ENCODE measurements at regions of chr10 and their contacts with region 1.

Region 1: GRCh38 chr10:17430647-17431355 is 23.6 kb downstream of the ST8SIA6 start:
- DNase-seq: peak; percentile 79
- H3K4me3 Mint-ChIP-seq: no peak overlapping the region
- H3K27ac Mint-ChIP-seq: no peak overlapping the region
- H3K4me1 Mint-ChIP-seq: peaks cover 55% of the 10 kb centered on the region
- H3K27me3 Mint-ChIP-seq: no peaks in the 10 kb centered on the region

Region 2: GRCh38 chr10:16817125-16818019 is 613.4 kb before region 1 on chr10 and contains the start of gene RSU1:
- CTCF ChIA-PET with region 1: no interaction called
- intact Hi-C with region 1: loop called (anchors 1 kb)
- DNase-seq: peak; percentile 100
- H3K4me3 Mint-ChIP-seq: peak within 1 kb of the TSS; percentile 89
- H3K27ac Mint-ChIP-seq: peak within 1 kb of the TSS; percentile 90
- H3K4me1 Mint-ChIP-seq: peaks cover 23% of the 10 kb centered on the region
- H3K27me3 Mint-ChIP-seq: no peaks in the 10 kb centered on the region
- total RNA-seq, gene RSU1: 43.4 to 45.1 TPM

Region 3: GRCh38 chr10:16843252-16843870 is 587.4 kb before region 1 on chr10:
- CTCF ChIA-PET with region 1: no interaction called
- intact Hi-C with region 1: loop called (anchors 1 kb)
- DNase-seq: no peak
- H3K4me3 Mint-ChIP-seq: no peak overlapping the region
- H3K27ac Mint-ChIP-seq: no peak overlapping the region
- H3K4me1 Mint-ChIP-seq: no peaks in the 10 kb centered on the region
- H3K27me3 Mint-ChIP-seq: no peaks in the 10 kb centered on the region

Region 4: GRCh38 chr10:17029581-17030271 is 401.1 kb before region 1 on chr10:
- CTCF ChIA-PET with region 1: no interaction called
- intact Hi-C with region 1: loop called (anchors 5 kb)
- DNase-seq: peak; percentile 94
- H3K4me3 Mint-ChIP-seq: peak overlapping the region; percentile 61
- H3K27ac Mint-ChIP-seq: peak overlapping the region; percentile 83
- H3K4me1 Mint-ChIP-seq: peaks cover 69% of the 10 kb centered on the region
- H3K27me3 Mint-ChIP-seq: no peaks in the 10 kb centered on the region

Region 5: DNA sequence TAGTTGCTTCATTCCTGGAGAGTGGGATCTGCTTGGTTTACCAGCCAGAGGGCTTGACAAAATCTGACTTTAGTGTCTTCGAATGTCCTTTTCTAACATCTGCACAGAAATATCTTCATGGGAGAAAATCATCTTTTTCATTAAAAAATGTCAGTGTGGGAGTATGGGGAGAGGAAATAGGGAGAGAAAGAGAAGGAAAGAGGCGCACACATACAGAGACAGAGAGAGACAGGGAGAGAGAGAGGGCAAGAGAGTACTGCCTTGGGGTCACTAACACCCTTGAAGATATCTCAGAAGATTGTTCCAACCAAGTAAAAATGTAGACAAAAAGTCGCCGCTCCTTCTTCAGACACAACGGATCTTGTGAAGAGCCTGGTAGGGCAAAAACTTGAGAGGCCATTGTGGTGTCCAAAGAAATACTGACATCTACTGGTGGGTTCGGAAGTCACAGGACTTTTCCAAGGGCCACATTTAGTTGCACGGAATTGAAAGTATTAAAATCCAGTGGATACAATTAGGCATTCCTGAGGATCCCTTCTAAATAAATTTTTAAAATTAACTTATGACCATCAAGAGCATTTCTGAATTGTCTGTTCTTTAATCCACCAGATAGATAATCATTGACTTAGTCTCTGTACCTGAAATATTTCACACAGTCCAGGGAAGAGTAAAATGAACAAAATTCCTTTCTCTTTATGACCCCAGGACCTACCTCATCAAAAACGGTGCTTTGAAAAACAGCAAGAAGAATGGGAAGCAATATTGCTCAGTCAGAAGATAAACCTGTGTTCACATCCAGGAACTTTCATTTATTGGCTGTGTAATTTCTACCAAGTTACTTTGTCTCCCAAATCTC is 173.1 kb before region 1 on chr10:
- CTCF ChIA-PET with region 1: interaction called, 5 read pairs
- intact Hi-C with region 1: loop called (anchors 1 kb)
- DNase-seq: peak; percentile 67
- H3K4me3 Mint-ChIP-seq: peak overlapping the region; percentile 3
- H3K27ac Mint-ChIP-seq: no peak overlapping the region
- H3K4me1 Mint-ChIP-seq: peaks cover 4% of the 10 kb centered on the region
- H3K27me3 Mint-ChIP-seq: no peaks in the 10 kb centered on the region

Region 6: DNA sequence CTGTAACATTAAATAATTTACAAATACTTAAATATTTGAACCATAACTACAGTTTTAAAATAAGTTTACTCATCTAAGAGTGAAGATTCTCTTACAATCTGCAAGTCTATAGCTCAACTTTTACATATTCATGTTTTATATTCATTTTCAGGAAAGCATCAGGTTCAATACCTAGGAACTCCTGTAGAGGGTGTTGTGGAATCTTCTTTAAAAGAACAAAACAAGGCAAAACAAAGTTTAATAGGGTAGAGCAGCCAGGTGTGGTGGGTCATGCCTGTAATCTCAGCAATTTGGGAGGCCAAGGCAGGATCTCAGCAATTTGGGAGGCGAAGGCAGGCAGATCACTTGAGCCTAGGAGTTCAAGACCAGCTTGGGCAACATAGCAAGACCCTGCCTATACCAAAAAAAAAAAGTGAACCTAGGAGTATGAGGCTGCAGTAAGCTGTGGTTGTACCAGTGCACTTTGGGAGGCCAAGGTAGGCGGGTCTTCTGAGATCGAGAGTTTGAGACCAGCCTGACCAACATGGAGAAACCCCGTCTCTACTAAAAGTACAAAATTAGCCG is 21.5 kb before region 1 on chr10:
- CTCF ChIA-PET with region 1: interaction called, 16 read pairs
- intact Hi-C with region 1: loop called (anchors 1 kb)
- DNase-seq: no peak
- H3K4me3 Mint-ChIP-seq: no peak overlapping the region
- H3K27ac Mint-ChIP-seq: no peak overlapping the region
- H3K4me1 Mint-ChIP-seq: peaks cover 22% of the 10 kb centered on the region
- H3K27me3 Mint-ChIP-seq: no peaks in the 10 kb centered on the region

Region 7: DNA sequence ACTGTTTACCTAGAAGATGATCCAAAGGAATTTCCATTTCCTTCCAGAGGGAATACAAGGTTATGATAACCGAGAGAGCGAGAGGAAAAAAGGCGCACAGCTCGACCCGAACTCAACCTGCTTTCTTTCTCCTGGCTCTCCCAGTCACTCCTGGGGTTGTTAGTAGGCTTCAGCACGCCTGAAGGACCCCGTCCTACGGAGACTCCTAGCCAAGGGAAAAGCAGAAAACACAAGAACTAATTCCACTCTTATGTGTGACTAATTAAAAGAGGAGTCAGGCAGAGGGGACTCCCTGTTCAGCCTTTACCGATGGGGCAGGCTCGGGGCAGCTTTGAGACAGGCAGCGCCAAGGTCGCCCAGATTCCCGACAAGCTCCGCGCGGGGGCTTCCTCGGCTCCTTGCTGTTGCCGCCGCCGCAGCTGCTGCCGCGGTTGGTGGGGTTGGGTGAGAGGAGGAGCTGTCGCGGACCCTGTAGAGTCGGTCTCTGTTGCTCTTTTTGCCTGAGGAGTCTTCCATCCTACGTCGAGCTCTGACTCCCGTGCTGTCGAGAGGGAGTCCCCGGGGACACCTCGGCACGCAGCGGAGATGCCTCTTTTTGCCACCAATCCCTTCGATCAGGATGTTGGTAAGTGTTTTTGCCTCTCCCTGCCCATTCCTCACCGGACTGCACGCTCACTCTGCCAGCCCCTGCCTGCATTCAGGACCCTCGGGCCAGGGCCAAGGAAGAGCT is 213.1 kb after region 1 on chr10 and contains the start of gene STAM:
- CTCF ChIA-PET with region 1: no interaction called
- intact Hi-C with region 1: loop called (anchors 1 kb)
- DNase-seq: peak; percentile 93
- H3K4me3 Mint-ChIP-seq: peak within 1 kb of the TSS; percentile 88
- H3K27ac Mint-ChIP-seq: peak within 1 kb of the TSS; percentile 99
- H3K4me1 Mint-ChIP-seq: peaks cover 49% of the 10 kb centered on the region
- H3K27me3 Mint-ChIP-seq: no peaks in the 10 kb centered on the region
- total RNA-seq, gene STAM: 16.3 to 16.6 TPM

Measured in activated naive CD4-positive, alpha-beta T cell treated with anti-CD3 and anti-CD28 coated beads for 36 hours (primary cell).